ENCODE measurements at regions of chr17 and their contacts with region 1.

Region 1: GRCh38 chr17:39963829-39964228 is 1.0 kb downstream of the GSDMA start:
- DNase-seq: peak in 1 of 3 donors; percentile 3
- ATAC-seq: no peak
- H3K4me3 ChIP-seq: no peak overlapping the region
- H3K27ac ChIP-seq: no peak overlapping the region
- H3K4me1 ChIP-seq: no peaks in the 10 kb centered on the region
- H3K27me3 ChIP-seq: no peaks in the 10 kb centered on the region

Region 2: DNA sequence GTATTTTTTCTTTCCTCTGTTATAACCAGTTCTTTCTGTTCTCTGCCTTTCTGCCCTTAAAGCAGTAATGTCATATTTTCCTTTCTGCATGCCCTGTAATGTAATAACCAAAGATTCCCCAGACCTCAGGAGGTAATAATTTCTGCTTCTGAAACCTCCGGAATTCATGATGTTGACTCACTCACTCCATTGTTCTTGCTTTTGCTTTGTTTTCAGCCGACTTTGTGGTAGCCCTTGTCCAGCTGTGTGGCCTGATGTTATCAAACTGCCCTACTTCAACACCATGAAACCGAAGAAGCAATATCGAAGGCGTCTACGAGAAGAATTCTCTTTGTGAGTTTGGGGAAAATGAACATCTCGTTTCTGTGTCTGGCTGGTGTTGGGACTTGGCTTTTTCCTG is 446.6 kb before region 1 on chr17:
- intact Hi-C with region 1: no loop called
- DNase-seq: no peak
- ATAC-seq: no peak
- H3K4me3 ChIP-seq: no peak overlapping the region
- H3K27ac ChIP-seq: no peak overlapping the region
- H3K4me1 ChIP-seq: no peaks in the 10 kb centered on the region
- H3K27me3 ChIP-seq: no peaks in the 10 kb centered on the region

Region 3: GRCh38 chr17:39872751-39873150 is 91.1 kb before region 1 on chr17:
- intact Hi-C with region 1: loop called in 1 of 4 experiments (anchors 10 kb)
- DNase-seq: no peak
- ATAC-seq: no peak
- H3K4me3 ChIP-seq: no peak overlapping the region
- H3K27ac ChIP-seq: no peak overlapping the region
- H3K4me1 ChIP-seq: no peaks in the 10 kb centered on the region
- H3K27me3 ChIP-seq: no peaks in the 10 kb centered on the region

Region 4: DNA sequence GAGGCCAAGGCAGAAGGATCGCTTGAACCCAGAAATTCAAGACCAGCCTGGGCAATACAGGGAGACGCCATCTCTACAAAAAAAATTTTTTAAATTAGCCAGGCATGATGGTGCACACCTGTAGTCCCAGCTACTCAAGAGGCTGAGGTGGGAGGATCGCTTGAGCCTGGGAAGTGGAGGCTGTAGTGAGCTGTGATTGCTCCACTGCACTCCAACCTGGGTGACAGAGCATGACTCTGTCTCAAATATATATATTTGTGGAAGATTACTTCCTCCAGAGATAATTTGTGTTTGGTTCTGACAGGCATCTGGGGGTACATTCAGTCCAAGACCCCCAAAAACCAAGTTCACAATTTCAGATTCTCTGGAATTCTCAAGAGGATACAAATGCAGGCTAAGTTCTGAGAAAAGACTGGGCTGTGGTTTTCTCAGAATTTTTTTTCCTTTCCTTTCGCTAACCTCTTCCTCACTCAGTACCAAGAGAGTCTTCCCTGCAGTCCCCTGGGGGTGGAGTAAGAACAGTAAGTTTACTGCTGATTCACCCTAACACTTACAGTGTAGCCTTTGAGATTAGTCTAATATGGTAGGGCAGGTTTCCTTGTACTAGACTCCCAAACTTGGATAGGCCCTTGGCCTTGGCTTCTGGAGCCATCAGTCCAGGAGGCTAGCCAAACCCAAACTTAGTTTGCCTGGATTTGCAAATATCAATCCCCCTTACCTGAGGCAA is 60.5 kb before region 1 on chr17:
- intact Hi-C with region 1: no loop called
- DNase-seq: no peak
- ATAC-seq: no peak
- H3K4me3 ChIP-seq: no peak overlapping the region
- H3K27ac ChIP-seq: no peak overlapping the region
- H3K4me1 ChIP-seq: no peaks in the 10 kb centered on the region
- H3K27me3 ChIP-seq: no peaks in the 10 kb centered on the region

Measured in right cardiac atrium (tissue), 5 donors.